Activated CD4-positive, alpha-beta T cell treated with anti-CD3 and anti-CD28 coated beads for 36 hours (primary cell): ENCODE measurements at regions of chr15 and their contacts with region 1.

Region 1: DNA sequence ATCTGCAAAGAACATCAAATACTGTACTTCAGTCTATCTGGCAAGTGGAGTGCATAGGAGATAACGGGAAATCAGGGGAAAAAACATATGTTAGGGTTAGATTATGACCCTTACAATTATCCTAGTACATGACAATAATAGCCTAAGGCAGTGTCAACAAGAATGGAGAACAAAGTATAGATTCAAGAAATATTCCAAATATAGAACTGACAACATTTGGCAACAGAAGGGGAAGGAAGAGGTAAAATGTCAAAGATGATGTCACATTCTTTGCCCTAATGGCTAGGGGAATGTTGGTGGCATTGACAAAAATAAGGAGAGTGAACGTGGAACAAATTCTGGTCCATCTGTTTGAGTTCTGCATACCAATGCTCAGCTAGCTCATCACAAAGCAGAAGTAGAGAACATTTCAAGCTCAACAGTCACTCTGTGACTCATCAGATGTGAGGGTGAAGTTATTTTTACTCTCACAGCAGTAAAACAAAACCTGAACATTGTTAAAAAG is 15.5 kb upstream of the ATP8B4 start:
- DNase-seq: no peak
- ATAC-seq: peak; percentile 47
- H3K4me3 Mint-ChIP-seq: peak overlapping the region; percentile 24
- H3K27ac Mint-ChIP-seq: peak overlapping the region; percentile 96
- H3K4me1 Mint-ChIP-seq: peaks cover 53% of the 10 kb centered on the region
- H3K27me3 Mint-ChIP-seq: no peaks in the 10 kb centered on the region

Region 2: GRCh38 chr15:48877630-48878595 is 1256.7 kb before region 1 on chr15 and contains the start of gene EID1:
- CTCF ChIA-PET with region 1: no interaction called
- POLR2A ChIA-PET with region 1: no interaction called
- intact Hi-C with region 1: loop called (anchors 5 kb)
- DNase-seq: peak; percentile 96
- ATAC-seq: peak; percentile 91
- H3K4me3 Mint-ChIP-seq: peak within 1 kb of the TSS; percentile 98
- H3K27ac Mint-ChIP-seq: peak within 1 kb of the TSS; percentile 99
- H3K4me1 Mint-ChIP-seq: peaks cover 45% of the 10 kb centered on the region
- H3K27me3 Mint-ChIP-seq: peaks cover 7% of the 10 kb centered on the region
- total RNA-seq, gene EID1: 73.6 to 82.5 TPM

Region 3: GRCh38 chr15:49046220-49047102 is 1088.1 kb before region 1 on chr15 and contains the start of gene SECISBP2L:
- CTCF ChIA-PET with region 1: no interaction called
- POLR2A ChIA-PET with region 1: no interaction called
- intact Hi-C with region 1: loop called in 1 of 2 experiments (anchors 10 kb)
- DNase-seq: peak; percentile 95
- ATAC-seq: peak; percentile 97
- H3K4me3 Mint-ChIP-seq: peak within 1 kb of the TSS; percentile 92
- H3K27ac Mint-ChIP-seq: peak within 1 kb of the TSS; percentile 84
- H3K4me1 Mint-ChIP-seq: peaks cover 22% of the 10 kb centered on the region
- H3K27me3 Mint-ChIP-seq: no peaks in the 10 kb centered on the region
- total RNA-seq, gene SECISBP2L: 22.4 to 36.8 TPM

Region 4: GRCh38 chr15:50066192-50066591 is 68.4 kb before region 1 on chr15:
- CTCF ChIA-PET with region 1: interaction called, 4 read pairs
- POLR2A ChIA-PET with region 1: no interaction called
- intact Hi-C with region 1: loop called (anchors 1 kb)
- DNase-seq: peak; percentile 55
- ATAC-seq: peak; percentile 94
- H3K4me3 Mint-ChIP-seq: no peak overlapping the region
- H3K27ac Mint-ChIP-seq: peak overlapping the region; percentile 44
- H3K4me1 Mint-ChIP-seq: peaks cover 23% of the 10 kb centered on the region
- H3K27me3 Mint-ChIP-seq: peaks cover 18% of the 10 kb centered on the region

Region 5: GRCh38 chr15:50247819-50248655 is 113.5 kb after region 1 on chr15:
- CTCF ChIA-PET with region 1: interaction called, 3 read pairs
- POLR2A ChIA-PET with region 1: interaction called, 5 read pairs
- intact Hi-C with region 1: loop called in 1 of 2 experiments (anchors 1 kb)
- DNase-seq: peak; percentile 83
- ATAC-seq: peak; percentile 99
- H3K4me3 Mint-ChIP-seq: peak overlapping the region; percentile 67
- H3K27ac Mint-ChIP-seq: peak overlapping the region; percentile 96
- H3K4me1 Mint-ChIP-seq: peaks cover 33% of the 10 kb centered on the region
- H3K27me3 Mint-ChIP-seq: no peaks in the 10 kb centered on the region

Region 6: GRCh38 chr15:50340416-50340815 is 205.8 kb after region 1 on chr15:
- CTCF ChIA-PET with region 1: no interaction called
- POLR2A ChIA-PET with region 1: no interaction called
- intact Hi-C with region 1: no loop called
- DNase-seq: no peak
- ATAC-seq: no peak
- H3K4me3 Mint-ChIP-seq: no peak overlapping the region
- H3K27ac Mint-ChIP-seq: no peak overlapping the region
- H3K4me1 Mint-ChIP-seq: peaks cover 16% of the 10 kb centered on the region
- H3K27me3 Mint-ChIP-seq: no peaks in the 10 kb centered on the region

Region 7: DNA sequence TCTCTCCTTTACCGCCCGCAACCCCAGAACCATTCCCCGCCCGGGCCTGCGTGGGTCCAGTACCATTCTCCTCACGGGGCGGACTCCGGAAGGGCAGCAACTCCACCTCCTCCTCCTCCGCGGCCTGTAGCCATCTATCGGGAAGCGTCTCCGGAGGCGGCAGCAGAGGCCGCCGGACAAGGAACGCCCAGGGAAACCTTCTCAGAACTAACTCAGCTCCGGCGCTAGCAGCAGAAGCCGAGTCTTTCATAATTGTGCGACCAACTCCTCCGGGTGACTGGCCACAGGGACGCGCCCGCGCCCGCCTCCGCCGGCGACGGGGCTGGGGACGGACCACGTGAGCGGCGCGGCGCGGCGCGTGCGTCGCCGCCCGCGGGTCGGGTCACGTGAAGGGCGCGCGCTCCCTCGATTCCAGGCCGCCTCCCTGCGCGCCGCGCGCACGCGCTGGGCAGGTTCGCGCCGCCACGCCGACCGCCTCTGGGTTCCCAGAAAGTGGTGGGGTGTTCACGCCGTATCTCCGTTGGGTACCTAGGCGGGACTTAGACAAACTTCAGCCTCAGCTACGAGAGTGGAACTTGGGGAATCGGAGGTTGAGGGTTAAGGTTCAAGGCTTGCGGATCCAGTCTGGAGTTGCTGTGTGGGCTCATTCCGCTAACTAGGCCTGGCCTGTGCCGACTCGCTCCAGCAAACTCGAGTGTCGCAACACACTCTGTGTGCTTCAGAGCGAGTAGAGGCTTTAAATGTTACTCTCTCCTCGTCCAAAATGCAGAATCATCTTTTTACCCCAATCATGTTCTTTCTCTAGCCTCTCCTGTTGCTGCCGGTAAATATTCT is 552.1 kb after region 1 on chr15 and contains the start of gene TRPM7:
- CTCF ChIA-PET with region 1: no interaction called
- POLR2A ChIA-PET with region 1: no interaction called
- intact Hi-C with region 1: loop called in 1 of 2 experiments (anchors 5 kb)
- DNase-seq: peak; percentile 95
- ATAC-seq: peak; percentile 79
- H3K4me3 Mint-ChIP-seq: peak within 1 kb of the TSS; percentile 99
- H3K27ac Mint-ChIP-seq: peak within 1 kb of the TSS; percentile 97
- H3K4me1 Mint-ChIP-seq: peaks cover 49% of the 10 kb centered on the region
- H3K27me3 Mint-ChIP-seq: no peaks in the 10 kb centered on the region
- total RNA-seq, gene TRPM7: 40.7 to 41.4 TPM

Region 8: DNA sequence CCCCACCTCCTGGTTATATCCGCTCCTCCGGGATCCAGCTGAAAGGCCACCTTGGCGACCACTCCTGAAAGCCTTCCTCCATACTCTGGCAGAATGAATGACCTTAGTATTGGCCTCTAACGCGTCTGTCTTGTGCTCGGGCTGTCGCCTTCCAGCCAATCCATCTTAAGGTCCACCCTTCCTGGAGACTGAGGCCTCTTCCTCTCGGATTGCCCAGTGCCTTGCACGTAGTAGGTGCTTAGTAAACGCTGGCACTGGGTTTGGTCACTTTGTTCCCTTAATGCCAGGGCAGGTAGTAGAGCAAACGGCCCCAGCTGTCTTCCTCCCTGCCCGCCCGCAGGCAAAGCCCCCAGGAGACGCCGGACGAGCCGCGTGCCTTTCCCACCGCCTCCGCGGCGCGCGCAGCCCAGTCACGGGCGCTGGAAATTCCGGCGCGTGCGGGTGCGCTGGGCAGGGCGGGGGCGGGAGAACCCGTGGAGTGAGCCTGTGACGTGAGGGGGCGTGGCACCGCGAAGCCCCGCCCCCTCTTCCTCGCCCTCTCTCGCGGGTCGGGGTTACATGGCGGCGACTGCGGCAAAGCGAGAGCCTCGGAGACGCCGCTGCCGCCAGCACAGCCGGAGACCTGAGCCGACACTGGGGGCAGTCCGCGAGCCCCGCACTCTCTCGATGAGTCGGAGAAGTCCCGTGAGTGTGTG is 1884.3 kb after region 1 on chr15 and contains the start of gene MAPK6:
- CTCF ChIA-PET with region 1: no interaction called
- POLR2A ChIA-PET with region 1: no interaction called
- intact Hi-C with region 1: loop called in 1 of 2 experiments (anchors 10 kb)
- DNase-seq: peak; percentile 97
- ATAC-seq: peak; percentile 76
- H3K4me3 Mint-ChIP-seq: peak within 1 kb of the TSS; percentile 86
- H3K27ac Mint-ChIP-seq: peak within 1 kb of the TSS; percentile 96
- H3K4me1 Mint-ChIP-seq: peaks cover 38% of the 10 kb centered on the region
- H3K27me3 Mint-ChIP-seq: peaks cover 5% of the 10 kb centered on the region
- total RNA-seq, gene MAPK6: 27.3 to 28.1 TPM